SK-N-SH (cell line): ENCODE measurements at regions of chr2 and their contacts with region 1.

Region 1: GRCh38 chr2:26922405-26923188 is 47.8 kb upstream of the MAPRE3 start:
- DNase-seq: peak; percentile 89
- H3K4me3 ChIP-seq: no peak overlapping the region
- H3K27ac ChIP-seq: peak overlapping the region in 1 of 2 experiments; percentile 22; a peak in 1 of 4 replicates
- H3K4me1 ChIP-seq: peaks cover 0 to 16% of the 10 kb centered on the region in 2 experiments; a peak in 2 of 4 replicates
- H3K27me3 ChIP-seq: peaks cover 9% of the 10 kb centered on the region; the same call in 1 of the 2 replicates
- CTCF ChIP-seq: peak; percentile 57
- EP300 ChIP-seq: no peak
- RAD21 ChIP-seq: peak; percentile 88

Region 2: DNA sequence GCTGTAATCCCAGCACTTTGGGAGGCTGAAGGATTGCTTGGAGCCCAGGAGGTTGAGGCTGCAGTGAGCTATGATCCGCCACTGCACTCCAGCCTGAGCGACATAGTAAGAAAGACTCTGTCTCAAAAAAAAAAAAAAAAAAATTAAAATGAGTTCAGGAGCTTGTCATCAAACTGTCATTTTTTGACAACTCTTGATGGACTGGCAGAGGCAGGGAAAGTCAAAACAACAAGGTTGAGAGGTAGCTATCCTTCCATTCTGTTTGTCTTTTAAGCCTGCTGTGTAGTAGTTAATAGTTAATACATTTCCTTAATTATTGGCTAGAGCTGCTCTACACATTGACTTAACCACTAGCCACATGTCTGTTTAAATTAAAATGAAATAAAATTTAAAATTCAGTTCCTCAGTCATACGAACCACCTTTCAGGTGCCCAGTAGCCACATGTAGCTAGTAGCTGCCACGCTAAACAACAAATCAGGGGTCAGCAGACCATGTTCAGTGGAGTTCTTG is 52.0 kb before region 1 on chr2:
- CTCF ChIA-PET with region 1: interaction called, 11 read pairs
- POLR2A ChIA-PET with region 1: no interaction called
- DNase-seq: no peak
- H3K4me3 ChIP-seq: no peak overlapping the region
- H3K27ac ChIP-seq: no peak overlapping the region
- H3K4me1 ChIP-seq: peaks cover 0 to 2% of the 10 kb centered on the region in 2 experiments; a peak in 1 of 4 replicates
- H3K27me3 ChIP-seq: peaks cover 38% of the 10 kb centered on the region; the same call in 1 of the 2 replicates
- CTCF ChIP-seq: no peak
- EP300 ChIP-seq: no peak
- RAD21 ChIP-seq: no peak

Region 3: DNA sequence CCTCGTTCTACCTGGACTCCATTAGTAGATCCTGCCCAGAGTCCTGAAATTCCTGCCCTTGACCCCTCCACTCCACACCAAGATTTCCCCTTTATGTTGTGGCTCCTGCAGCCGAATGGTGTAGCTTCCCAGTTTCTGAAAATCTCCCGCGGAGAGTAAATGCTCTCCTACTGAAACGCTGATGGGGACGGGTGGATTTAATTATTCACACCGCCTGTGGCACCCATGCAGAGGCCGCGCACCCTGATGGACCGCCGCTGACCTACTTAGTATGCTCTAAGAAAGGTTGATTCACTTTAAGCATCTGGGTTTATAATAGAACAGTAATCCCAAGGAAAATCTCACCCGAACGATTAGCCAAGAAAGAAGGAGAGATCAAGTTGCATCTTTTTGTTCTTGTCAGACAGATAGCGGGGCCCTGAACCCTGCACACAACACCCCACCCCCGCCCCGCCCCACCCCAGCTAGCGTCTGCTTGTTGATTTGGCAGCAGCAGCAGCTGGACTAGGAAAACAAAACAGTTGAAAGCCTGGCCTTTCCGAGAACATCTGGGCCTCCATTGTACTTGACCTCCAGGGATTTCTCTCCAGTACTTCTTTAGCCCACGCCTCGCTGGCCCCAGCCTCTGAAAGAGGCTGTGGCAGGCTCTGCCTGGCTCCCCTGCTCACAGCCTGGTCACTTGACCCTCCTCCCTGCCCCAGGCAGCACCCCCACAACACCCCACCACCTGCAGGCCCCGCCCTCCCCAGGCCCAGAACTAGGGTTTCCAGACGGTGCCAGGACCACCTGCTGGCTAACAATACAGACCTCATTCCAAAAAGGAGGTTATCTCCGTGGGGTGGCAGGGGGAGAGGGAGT is 21.0 kb before region 1 on chr2:
- CTCF ChIA-PET with region 1: interaction called, 14 read pairs
- POLR2A ChIA-PET with region 1: interaction called, 4 read pairs
- DNase-seq: no peak
- H3K4me3 ChIP-seq: no peak overlapping the region
- H3K27ac ChIP-seq: no peak overlapping the region; a peak in 1 of 4 replicates
- H3K4me1 ChIP-seq: peaks cover 0 to 11% of the 10 kb centered on the region in 2 experiments; a peak in 1 of 4 replicates
- H3K27me3 ChIP-seq: peaks cover 58% of the 10 kb centered on the region
- CTCF ChIP-seq: no peak
- EP300 ChIP-seq: no peak
- RAD21 ChIP-seq: no peak

Region 4: DNA sequence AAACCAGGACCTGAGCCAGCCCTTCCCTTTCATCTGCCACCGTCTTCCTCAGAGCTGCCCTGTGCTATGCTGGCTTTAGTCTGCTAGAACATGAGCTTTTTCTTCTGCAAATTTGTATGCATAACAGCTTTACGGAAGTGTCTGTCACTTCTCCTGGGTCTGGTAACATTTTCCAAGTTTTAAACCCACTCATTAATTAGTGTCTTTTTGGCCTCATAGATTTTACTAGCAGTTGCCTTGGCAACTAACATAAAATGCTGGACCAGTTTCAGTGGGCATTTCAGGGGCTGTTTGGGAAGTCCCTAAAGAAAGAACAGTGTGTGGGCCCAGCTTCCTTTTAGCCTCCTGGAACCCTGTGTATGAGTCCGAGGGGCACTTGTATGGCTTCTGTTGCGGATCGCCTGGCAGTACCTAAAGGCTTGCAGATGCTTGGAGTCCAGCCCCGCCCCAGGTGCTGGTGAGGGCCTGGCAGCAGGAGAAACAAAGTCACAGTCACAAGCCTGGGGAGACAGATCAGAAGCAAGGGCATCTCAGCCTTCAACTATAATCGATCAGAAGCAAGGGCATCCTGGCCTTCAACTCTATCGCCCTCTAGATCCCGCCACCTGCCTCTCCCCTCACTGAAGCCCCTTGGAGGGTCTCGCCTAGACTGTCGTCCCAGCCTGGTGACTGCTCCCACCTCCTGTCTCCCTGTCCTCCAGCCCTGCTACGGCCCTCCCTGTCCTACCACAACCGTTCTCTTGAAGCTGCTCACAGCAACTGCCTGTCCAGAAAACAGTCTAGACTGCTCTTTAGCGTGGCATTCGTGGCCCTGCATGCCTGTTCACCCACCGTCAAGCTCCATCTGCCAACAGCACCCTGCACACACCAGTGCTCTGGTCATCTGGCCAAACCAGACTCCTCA is 11.1 kb after region 1 on chr2:
- CTCF ChIA-PET with region 1: interaction called, 72 read pairs
- POLR2A ChIA-PET with region 1: interaction called, 4 read pairs
- DNase-seq: no peak
- H3K4me3 ChIP-seq: no peak overlapping the region
- H3K27ac ChIP-seq: no peak overlapping the region
- H3K4me1 ChIP-seq: no peaks in the 10 kb centered on the region
- H3K27me3 ChIP-seq: peaks cover 30% of the 10 kb centered on the region
- CTCF ChIP-seq: no peak
- EP300 ChIP-seq: no peak
- RAD21 ChIP-seq: no peak

Region 5: DNA sequence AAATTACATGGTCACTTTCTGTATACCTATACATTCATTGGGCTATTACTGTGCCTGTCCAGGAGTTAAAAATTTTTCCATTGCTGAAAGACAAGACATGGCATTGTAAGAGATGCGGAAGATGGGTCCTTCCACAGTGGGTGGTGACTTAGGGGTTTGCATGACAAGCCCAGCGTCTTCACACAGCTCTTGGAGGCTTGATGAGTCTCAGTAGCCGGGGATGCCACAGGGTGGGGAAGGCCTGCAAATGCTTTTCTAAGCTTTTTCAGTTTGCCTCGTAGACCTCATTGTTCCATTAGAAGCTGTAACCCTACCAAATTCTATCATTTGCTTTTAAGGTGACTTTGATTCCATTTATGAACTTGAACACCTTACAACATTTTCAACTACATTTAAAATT is 29.8 kb after region 1 on chr2:
- CTCF ChIA-PET with region 1: interaction called, 14 read pairs
- POLR2A ChIA-PET with region 1: no interaction called
- DNase-seq: no peak
- H3K4me3 ChIP-seq: no peak overlapping the region
- H3K27ac ChIP-seq: no peak overlapping the region
- H3K4me1 ChIP-seq: peaks cover 0 to 5% of the 10 kb centered on the region in 2 experiments; a peak in 1 of 4 replicates
- H3K27me3 ChIP-seq: peaks cover 57% of the 10 kb centered on the region
- CTCF ChIP-seq: no peak
- EP300 ChIP-seq: no peak
- RAD21 ChIP-seq: no peak